Heart right ventricle (tissue), 16 donors: ENCODE measurements at regions of chr18 and their contacts with region 1.

Region 1: GRCh38 chr18:35267161-35267651 is 22.8 kb downstream of the ZSCAN30 start:
- DNase-seq: peak; percentile 85
- ATAC-seq: peak; percentile 95 to 98 (median 98)
- H3K4me3 ChIP-seq: peak overlapping the region; percentile 38 to 88 (median 73)
- H3K27ac ChIP-seq: peak overlapping the region; percentile 21 to 93 (median 87)
- H3K4me1 ChIP-seq: peaks cover 0 to 12% (median 5%) of the 10 kb centered on the region in 9 donors
- H3K27me3 ChIP-seq: no peaks in the 10 kb centered on the region
- CTCF ChIP-seq: peak in 3 of 9 donors; percentile 6 to 31 (median 15)

Region 2: GRCh38 chr18:35240664-35241447 is 26.4 kb before region 1 on chr18 and contains the start of gene ZNF397:
- intact Hi-C with region 1: loop called in 2 of 10 experiments (anchors 1 to 2 kb)
- DNase-seq: peak; percentile 98 to 99
- ATAC-seq: peak; percentile 100
- H3K4me3 ChIP-seq: peak within 1 kb of the TSS; percentile 54 to 92 (median 74)
- H3K27ac ChIP-seq: peak within 1 kb of the TSS; percentile 93 to 99 (median 98)
- H3K4me1 ChIP-seq: peaks cover 0 to 21% (median 13%) of the 10 kb centered on the region in 9 donors
- H3K27me3 ChIP-seq: no peaks in the 10 kb centered on the region
- CTCF ChIP-seq: peak in 2 of 9 donors; percentile 4 to 19
- total RNA-seq, gene ZNF397: 12.7 to 18.6 (median 14.6) TPM

Region 3: DNA sequence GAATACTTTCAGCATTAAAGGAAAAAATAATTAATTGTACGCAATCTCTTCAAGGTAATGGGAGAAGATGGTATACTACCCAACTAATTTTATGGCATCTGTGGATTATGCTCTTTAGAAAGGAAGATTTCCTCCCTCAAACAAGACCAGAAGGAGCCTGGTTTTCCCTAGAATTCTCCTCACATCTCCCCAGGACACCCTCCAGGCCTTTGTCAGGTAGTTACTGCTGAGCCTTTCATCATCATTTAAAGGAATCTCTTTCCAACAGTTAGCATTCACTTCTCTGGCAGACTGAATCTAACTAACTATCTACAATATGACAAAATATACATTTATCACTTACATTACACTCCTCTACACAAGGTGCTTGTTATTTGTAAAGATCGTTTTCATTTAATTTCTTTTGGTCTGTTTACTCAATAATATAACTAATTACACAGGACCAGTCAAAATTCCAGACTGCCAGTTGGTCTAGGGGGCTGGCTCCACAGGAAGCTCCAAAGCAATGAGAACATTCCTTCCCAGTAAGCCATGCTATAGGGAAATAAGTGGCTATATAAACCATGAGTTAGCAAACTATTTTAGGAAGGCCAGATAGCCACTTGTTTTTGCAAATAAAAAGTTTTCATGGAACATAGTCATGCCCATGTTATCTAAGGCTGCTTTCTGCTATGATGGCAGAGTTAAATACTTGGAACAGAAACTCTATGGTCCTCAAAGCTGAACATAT is 57.9 kb after region 1 on chr18:
- intact Hi-C with region 1: no loop called
- DNase-seq: no peak
- ATAC-seq: no peak
- H3K4me3 ChIP-seq: no peak overlapping the region
- H3K27ac ChIP-seq: no peak overlapping the region
- H3K4me1 ChIP-seq: no peaks in the 10 kb centered on the region
- H3K27me3 ChIP-seq: no peaks in the 10 kb centered on the region
- CTCF ChIP-seq: no peak